HEK293 (cell line): ENCODE measurements at regions of chr16 and their contacts with region 1.

Region 1: DNA sequence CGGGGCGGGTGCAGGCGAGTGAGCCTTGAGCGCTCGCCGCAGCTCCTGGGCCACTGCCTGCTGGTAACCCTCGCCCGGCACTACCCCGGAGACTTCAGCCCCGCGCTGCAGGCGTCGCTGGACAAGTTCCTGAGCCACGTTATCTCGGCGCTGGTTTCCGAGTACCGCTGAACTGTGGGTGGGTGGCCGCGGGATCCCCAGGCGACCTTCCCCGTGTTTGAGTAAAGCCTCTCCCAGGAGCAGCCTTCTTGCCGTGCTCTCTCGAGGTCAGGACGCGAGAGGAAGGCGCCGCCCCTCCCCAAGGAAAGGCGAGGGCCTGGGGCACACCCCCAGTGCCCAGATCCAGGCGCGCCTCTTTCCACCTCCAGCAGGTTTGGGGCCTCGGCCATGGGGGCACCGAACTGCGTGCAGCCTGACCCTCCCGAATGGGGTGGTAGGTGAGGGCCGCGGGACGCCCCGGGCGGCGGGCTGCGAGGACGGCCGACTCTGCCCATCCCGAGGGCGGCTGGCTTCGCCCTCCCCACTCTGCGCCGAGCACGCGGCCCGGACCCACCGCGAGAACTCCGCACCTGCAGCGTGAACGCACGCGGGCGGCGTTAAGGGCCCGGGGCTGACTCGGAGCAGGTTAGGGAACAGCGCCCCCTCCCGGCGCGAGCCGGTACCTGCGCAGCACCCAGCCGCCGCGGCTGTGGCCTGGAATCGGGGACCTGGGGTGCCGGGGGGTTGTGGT is 844 bp downstream of the HBQ1 start:
- H3K4me3 ChIP-seq: no peak overlapping the region; the same call in 1 of the 2 replicates
- H3K27ac ChIP-seq: peak overlapping the region; percentile 25; the same call in 1 of the 2 replicates
- H3K4me1 ChIP-seq: peaks cover 3% of the 10 kb centered on the region; the same call in 1 of the 2 replicates
- CTCF ChIP-seq: peak; percentile 96

Region 2: GRCh38 chr16:57711-58110 is 123.4 kb before region 1 on chr16:
- CTCF ChIA-PET with region 1: no interaction called
- POLR2A ChIA-PET with region 1: no interaction called
- H3K4me3 ChIP-seq: no peak overlapping the region
- H3K27ac ChIP-seq: no peak overlapping the region
- H3K4me1 ChIP-seq: no peaks in the 10 kb centered on the region
- CTCF ChIP-seq: no peak

Region 3: DNA sequence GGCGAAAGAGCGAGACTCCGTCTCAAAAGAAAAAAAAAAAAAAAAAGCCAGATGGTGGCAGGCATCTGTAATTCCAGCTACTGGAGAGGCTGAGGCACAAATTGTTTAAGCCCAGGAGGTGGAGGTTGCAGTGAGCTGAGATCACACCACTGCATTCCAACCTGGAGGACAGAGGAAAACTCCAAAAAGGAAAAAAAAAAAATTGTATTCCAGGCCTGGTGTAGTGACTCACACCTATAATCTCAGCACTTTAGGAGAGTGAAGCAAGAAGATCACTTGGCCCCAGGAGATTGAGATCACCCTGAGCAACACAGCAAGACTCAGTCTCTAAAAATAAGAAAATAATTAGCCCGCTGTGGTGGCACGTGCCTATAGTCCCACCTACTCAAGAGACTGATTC is 19.3 kb after region 1 on chr16:
- CTCF ChIA-PET with region 1: interaction called, 13 read pairs
- POLR2A ChIA-PET with region 1: interaction called, 3 read pairs
- H3K4me3 ChIP-seq: no peak overlapping the region
- H3K27ac ChIP-seq: no peak overlapping the region
- H3K4me1 ChIP-seq: no peaks in the 10 kb centered on the region
- CTCF ChIP-seq: no peak

Region 4: DNA sequence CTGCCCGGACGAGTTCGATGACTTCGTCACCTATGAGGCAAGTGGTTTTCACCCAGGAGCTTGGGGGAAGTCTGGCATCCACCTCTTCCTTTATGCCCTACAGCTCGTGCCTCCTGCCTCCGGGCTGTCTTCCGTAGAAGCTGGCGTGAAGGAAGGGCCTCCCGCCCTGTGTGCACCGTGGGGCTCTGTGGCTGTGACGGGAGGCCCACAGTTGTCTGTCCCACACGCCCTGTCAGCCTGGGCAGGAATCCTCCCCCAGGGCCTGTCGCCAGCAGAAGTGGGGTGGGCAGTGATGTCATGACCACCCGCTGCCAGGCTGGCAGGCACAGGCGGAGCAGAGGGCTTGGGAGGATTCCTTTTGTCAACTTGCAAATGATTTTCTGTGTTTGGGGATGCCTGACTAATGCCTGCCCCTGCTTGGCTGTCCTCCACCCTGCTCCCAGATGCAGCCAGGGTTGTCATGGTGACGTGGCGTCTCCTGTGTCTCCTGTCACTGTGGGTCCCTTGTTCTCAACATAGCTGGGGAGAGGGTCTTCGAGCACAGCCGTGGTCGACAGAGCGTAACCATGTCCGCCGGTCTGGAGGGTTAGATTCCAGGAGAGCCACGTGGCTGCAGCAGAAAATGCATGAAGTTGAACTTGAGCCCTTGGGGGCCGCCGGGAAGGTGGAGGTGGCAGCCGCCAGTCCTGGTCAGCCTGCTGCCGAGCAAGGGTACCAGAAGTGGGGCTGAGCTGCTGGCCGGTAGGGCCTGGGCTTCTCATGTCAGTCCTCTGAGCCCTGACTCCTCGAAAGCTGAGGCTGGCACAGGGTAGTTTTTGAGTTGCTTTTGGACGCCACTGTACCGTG is 290.5 kb after region 1 on chr16:
- CTCF ChIA-PET with region 1: no interaction called
- POLR2A ChIA-PET with region 1: no interaction called
- H3K4me3 ChIP-seq: no peak overlapping the region
- H3K27ac ChIP-seq: no peak overlapping the region
- H3K4me1 ChIP-seq: 0 out of 2 replicates have a peak, but pooled peaks cover 4% of the 10 kb centered on the region
- CTCF ChIP-seq: no peak